Left lung (tissue), 14 donors: ENCODE measurements at regions of chr12 and their contacts with region 1.

Region 1: DNA sequence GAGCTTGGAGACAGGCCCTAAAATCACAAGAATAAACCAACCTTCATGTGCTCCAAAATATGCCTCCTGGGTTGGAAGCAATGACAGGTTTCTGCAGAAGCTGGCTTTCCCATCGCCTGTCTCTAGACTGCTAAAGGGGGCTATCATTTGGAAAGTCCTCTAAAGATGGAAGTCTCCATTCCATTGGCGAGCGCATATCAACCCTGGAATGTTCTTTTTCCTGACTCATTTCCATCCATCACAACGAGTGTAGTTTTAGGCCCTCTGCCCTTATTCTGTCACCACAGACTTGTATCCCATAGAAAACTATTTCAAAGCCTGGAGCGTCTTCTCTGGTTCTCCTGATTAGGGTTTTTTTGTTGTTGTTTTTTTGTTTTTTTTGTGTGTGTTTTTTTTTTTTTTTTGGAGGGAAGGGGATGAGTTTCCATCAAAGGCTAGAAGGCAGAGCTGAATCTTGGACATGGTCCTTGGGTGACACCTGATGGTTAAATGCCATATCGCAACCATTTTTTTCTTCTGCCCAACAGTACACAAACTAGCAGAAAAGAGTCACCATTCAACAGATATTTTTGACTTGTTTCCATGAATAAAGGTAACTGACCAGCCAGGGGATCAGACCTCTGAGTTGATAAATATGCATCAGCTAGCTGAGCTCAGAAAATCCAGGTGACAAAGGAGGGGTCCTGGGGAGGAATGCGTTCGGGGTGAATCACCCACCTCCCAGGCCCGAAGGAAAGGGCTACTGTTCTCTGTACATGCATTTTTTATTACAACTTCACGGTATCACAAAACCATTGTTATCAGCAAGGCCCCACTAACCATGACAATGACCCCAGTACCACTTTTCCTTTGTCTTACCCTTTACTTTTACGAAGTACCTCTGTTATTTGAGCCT is 40.5 kb downstream of the KCNA5 start:
- DNase-seq: peak in 2 of 4 donors; percentile 42 to 71
- ATAC-seq: peak; percentile 77
- H3K4me3 ChIP-seq: no peak overlapping the region
- H3K27ac ChIP-seq: no peak overlapping the region
- H3K4me1 ChIP-seq: no peaks in the 10 kb centered on the region
- H3K27me3 ChIP-seq: peaks cover 0 to 18% of the 10 kb centered on the region in 2 donors
- CTCF ChIP-seq: peak; percentile 52 to 53

Region 2: GRCh38 chr12:5022465-5023061 is 61.6 kb before region 1 on chr12:
- intact Hi-C with region 1: loop called in 1 of 2 experiments (anchors 5 kb)
- DNase-seq: peak in 3 of 4 donors; percentile 32 to 82 (median 67)
- ATAC-seq: peak; percentile 89
- H3K4me3 ChIP-seq: no peak overlapping the region
- H3K27ac ChIP-seq: no peak overlapping the region
- H3K4me1 ChIP-seq: no peaks in the 10 kb centered on the region
- H3K27me3 ChIP-seq: peaks cover 0 to 27% of the 10 kb centered on the region in 2 donors
- CTCF ChIP-seq: peak; percentile 84 to 90